PC-3 (cell line): ENCODE measurements at regions of chr22 and their contacts with region 1.

Region 1: GRCh38 chr22:38317122-38317994 is at the start of gene CSNK1E:
- DNase-seq: peak; percentile 57
- ATAC-seq: peak; percentile 19
- H3K4me3 ChIP-seq: peak within 1 kb of the TSS; percentile 99
- H3K27ac ChIP-seq: peak within 1 kb of the TSS; percentile 99
- H3K4me1 ChIP-seq: peaks cover 44% of the 10 kb centered on the region
- H3K27me3 ChIP-seq: no peaks in the 10 kb centered on the region
- CTCF ChIP-seq: no peak
- total RNA-seq, gene CSNK1E: 147 and 179 TPM in 2 replicates

Region 2: DNA sequence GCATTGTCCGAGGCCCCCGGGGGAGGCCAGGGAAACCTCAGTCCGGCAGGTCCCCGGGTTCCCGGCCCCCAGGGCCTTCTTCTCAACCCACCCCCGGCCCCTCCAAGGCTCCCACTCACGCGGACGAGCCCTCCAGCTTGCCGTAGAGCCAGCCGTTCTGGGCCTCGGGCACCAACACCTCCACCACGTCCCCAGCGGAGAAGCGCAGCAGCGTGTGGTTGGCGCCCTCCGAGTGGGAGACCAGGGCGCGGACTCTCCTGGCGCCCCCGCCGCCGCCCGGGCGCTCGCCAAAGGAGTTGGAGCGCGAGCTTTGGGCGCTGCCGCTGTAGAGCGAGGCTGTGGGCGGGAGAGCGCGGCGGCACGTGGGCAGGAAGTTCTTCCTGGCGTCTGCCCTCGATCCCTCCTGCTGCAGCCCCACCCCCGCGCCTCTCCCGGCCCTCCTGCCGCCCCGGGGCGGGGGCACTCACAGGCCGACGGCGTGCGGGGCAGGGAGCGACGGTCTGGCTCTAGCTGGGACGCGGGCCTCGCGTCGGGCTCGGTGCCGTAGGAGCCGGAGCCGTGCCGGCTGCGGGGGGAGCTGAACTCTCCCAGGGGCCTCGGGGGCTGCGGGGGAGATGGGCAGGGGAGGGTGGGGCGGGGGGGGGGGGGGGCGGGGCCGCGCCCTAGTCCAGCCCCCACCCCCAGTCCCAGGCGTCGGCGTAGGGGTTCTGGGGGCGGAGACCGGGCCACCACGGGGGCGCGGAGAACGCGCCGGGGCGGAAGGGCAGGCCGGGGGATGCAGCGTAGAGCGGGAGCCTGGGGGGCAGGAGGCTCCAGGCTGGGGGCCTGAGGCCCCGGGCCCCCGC is 228.5 kb before region 1 on chr22:
- CTCF ChIA-PET with region 1: no interaction called
- POLR2A ChIA-PET with region 1: no interaction called
- intact Hi-C with region 1: no loop called
- DNase-seq: no peak
- ATAC-seq: no peak
- H3K4me3 ChIP-seq: no peak overlapping the region
- H3K27ac ChIP-seq: no peak overlapping the region
- H3K4me1 ChIP-seq: no peaks in the 10 kb centered on the region
- H3K27me3 ChIP-seq: no peaks in the 10 kb centered on the region
- CTCF ChIP-seq: no peak

Region 3: GRCh38 chr22:38239101-38239761 is 78.1 kb before region 1 on chr22:
- CTCF ChIA-PET with region 1: no interaction called
- POLR2A ChIA-PET with region 1: interaction called, 13 read pairs
- intact Hi-C with region 1: loop called (anchors 5 kb)
- DNase-seq: peak; percentile 93
- ATAC-seq: peak; percentile 86
- H3K4me3 ChIP-seq: peak overlapping the region; percentile 30; the same call in 1 of the 2 replicates
- H3K27ac ChIP-seq: peak overlapping the region; percentile 99
- H3K4me1 ChIP-seq: peaks cover 57% of the 10 kb centered on the region
- H3K27me3 ChIP-seq: no peaks in the 10 kb centered on the region
- CTCF ChIP-seq: peak; percentile 45; the same call in 1 of the 2 replicates

Region 4: DNA sequence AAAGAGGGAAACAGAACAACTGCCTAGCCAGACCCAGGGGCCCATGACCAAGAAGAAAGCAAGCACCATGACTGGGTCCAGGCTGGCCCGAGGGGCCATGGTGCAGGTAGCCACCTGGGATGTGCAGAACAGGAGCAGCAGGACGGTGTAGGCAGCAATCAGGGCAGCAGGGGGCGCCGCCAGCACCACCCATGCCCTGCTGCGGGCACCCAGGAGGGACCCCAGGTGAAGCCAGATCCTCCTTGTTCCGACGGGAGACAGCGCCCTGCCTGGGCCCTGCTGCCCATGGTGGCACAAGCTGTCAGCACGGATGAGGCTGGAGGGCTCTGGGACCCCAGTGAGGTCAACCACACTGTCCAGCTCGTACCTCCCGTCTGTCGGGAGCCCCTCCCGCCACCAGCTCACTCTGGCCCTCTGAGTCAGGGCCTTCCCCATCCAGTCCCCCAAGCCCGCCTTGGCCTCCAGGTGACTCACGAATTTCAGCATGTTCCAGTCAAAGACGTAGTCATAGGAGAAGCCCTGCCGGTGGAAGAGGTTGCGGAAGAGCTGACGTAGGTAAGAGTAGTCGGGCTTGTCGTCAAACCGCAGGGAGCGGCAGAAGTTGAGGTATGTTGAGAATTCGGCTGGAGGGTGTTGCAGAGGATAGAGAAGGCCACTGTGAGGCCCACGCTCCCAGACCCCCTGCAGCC is 18.9 kb before region 1 on chr22:
- CTCF ChIA-PET with region 1: no interaction called
- POLR2A ChIA-PET with region 1: no interaction called
- intact Hi-C with region 1: loop called (anchors 2 kb)
- DNase-seq: peak; percentile 99
- ATAC-seq: peak; percentile 90
- H3K4me3 ChIP-seq: no peak overlapping the region
- H3K27ac ChIP-seq: peak overlapping the region; percentile 99
- H3K4me1 ChIP-seq: peaks cover 35% of the 10 kb centered on the region
- H3K27me3 ChIP-seq: no peaks in the 10 kb centered on the region
- CTCF ChIP-seq: peak; percentile 65

Region 5: GRCh38 chr22:38347897-38348750 is 30.8 kb after region 1 on chr22:
- CTCF ChIA-PET with region 1: no interaction called
- POLR2A ChIA-PET with region 1: interaction called, 42 read pairs
- intact Hi-C with region 1: no loop called
- DNase-seq: peak; percentile 55
- ATAC-seq: peak; percentile 74
- H3K4me3 ChIP-seq: no peak overlapping the region
- H3K27ac ChIP-seq: peak overlapping the region; percentile 34
- H3K4me1 ChIP-seq: peaks cover 6% of the 10 kb centered on the region; the same call in 1 of the 2 replicates
- H3K27me3 ChIP-seq: no peaks in the 10 kb centered on the region
- CTCF ChIP-seq: no peak